ENCODE measurements at regions of chr22 and their contacts with region 1.

Region 1: DNA sequence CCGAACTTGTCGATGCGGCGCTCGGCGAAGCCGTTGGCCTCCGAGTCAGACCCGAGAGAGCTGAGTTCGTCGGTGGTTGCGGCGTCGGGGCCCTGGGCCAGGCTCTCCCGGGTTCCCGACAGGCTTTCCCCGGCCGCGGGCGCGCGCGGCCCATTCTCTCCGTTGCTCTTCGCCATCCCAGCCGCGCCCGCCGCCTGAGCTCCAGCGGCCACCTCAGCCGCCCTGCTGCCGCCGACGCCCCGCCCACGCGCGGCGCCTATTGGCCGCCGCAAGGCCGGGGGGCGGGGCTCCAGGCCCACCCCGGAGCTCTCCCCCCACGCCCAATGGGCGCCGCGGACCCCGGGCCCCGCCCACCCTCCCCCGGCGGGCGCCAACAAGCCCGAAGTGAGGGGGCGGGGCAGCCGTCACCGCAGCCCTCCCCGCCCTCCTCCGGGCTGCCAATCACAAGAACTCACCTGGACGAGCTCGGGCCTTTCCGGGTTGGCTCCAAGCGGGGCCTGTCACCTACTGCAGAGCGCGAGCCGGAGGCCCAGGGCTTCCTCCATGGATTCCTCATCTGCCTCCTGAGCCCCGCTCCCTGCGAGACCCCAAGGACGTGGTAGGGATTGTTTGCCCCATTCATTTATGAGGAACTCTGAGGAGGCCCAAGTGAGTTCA is at the start of gene TBC1D10A:
- DNase-seq: peak; percentile 92
- H3K4me3 Mint-ChIP-seq: peak within 1 kb of the TSS; percentile 71
- H3K27ac Mint-ChIP-seq: peak within 1 kb of the TSS; percentile 86
- H3K4me1 Mint-ChIP-seq: peaks cover 23% of the 10 kb centered on the region
- H3K27me3 Mint-ChIP-seq: no peaks in the 10 kb centered on the region
- CTCF ChIP-seq: no peak
- total RNA-seq, gene TBC1D10A: 11.1 and 13.1 TPM in 2 replicates

Region 2: GRCh38 chr22:30262917-30263741 is 63.7 kb before region 1 on chr22:
- CTCF ChIA-PET with region 1: interaction called, 15 read pairs
- POLR2A ChIA-PET with region 1: interaction called, 4 read pairs
- intact Hi-C with region 1: loop called (anchors 2 kb)
- DNase-seq: peak; percentile 64
- H3K4me3 Mint-ChIP-seq: peak overlapping the region; percentile 47
- H3K27ac Mint-ChIP-seq: no peak overlapping the region
- H3K4me1 Mint-ChIP-seq: peaks cover 6% of the 10 kb centered on the region
- H3K27me3 Mint-ChIP-seq: no peaks in the 10 kb centered on the region
- CTCF ChIP-seq: peak; percentile 99

Region 3: GRCh38 chr22:30305519-30305905 is 21.3 kb before region 1 on chr22:
- CTCF ChIA-PET with region 1: interaction called, 4 read pairs
- POLR2A ChIA-PET with region 1: interaction called, 36 read pairs
- intact Hi-C with region 1: no loop called
- DNase-seq: peak; percentile 42
- H3K4me3 Mint-ChIP-seq: peak overlapping the region; percentile 15
- H3K27ac Mint-ChIP-seq: peak overlapping the region; percentile 49
- H3K4me1 Mint-ChIP-seq: peaks cover 60% of the 10 kb centered on the region
- H3K27me3 Mint-ChIP-seq: no peaks in the 10 kb centered on the region
- CTCF ChIP-seq: no peak

Region 4: DNA sequence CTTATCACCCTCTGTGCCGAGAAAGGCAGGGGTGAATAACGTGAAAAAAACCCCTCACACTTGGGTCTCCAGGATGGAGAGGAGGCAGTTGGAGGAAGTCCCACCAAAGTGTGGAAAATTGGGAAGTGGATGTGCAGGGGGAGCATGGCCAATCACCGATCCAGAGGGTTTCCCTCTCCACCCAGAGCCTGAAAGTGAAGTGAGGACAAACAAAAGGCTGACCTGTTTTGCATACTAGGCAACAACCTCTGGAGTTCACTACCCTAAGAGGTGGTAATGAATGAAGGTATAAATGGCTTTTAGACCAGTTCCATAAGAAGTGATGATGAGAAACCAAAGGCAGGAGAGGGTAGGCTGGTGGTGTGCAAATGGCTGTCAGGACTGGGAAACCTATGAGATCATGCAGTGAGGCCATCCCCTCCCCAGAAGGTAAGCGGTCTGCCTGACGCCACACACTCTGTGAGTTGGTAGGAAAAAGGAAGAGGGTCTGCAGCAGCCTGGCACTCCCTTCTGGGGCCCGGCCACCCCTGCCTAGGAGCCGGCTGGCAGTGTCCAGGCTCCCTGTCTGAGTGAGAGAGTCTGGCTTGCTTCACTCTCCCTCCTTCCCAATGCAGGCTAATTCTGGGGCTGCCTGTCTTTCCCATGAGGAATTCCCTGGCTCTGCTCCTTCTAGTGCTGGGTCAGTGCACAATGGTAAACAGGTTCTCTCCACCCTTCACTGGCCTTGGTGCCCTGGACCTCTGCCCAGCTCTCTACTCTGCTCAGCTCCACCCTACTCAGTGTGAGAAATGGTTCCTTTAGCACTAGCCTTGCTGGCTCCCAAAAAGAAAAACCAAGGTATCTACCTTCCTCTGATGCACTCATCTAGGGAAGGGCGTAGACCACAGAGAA is 15.7 kb before region 1 on chr22:
- CTCF ChIA-PET with region 1: interaction called, 4 read pairs
- POLR2A ChIA-PET with region 1: interaction called, 36 read pairs
- intact Hi-C with region 1: no loop called
- DNase-seq: peak; percentile 89
- H3K4me3 Mint-ChIP-seq: peak overlapping the region; percentile 4
- H3K27ac Mint-ChIP-seq: peak overlapping the region; percentile 63
- H3K4me1 Mint-ChIP-seq: peaks cover 47% of the 10 kb centered on the region
- H3K27me3 Mint-ChIP-seq: no peaks in the 10 kb centered on the region
- CTCF ChIP-seq: no peak

Region 5: DNA sequence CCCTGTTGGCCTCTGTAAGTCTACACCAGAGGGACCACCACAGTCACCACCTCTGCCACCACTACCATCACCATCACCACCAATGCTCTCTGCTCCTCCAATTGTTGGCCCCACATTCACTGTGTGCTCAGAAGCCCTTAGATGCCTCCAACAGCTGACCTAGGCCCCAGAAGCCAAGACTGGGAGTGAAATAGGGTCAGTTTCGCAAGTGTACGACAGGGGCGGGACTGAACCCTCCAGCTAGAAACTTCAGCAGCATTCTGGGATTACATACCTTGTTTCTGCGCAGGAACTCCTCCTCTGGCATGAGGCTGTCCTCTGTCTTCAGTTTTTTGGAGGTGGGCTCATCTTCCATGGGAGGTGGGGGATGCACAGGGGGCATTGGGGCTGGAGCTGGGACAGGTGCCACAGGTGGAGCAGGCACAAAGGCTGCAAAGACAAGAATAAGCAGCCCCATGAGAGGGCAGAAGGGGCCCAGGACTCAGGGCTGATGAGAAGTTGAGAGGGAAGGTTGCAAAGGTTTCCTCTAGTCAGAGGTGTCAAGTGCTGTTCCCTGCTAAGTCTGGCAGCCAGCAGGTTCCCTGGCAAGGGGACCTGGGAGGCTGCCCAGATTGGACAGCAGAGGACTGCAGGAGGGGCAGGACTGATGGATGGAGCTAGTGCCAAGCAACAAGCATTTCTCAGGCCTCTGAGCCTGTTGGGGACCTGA is 10.1 kb after region 1 on chr22:
- CTCF ChIA-PET with region 1: interaction called, 3 read pairs
- POLR2A ChIA-PET with region 1: interaction called, 11 read pairs
- intact Hi-C with region 1: no loop called
- DNase-seq: no peak
- H3K4me3 Mint-ChIP-seq: no peak overlapping the region
- H3K27ac Mint-ChIP-seq: no peak overlapping the region
- H3K4me1 Mint-ChIP-seq: no peaks in the 10 kb centered on the region
- H3K27me3 Mint-ChIP-seq: no peaks in the 10 kb centered on the region
- CTCF ChIP-seq: no peak

Region 6: GRCh38 chr22:30348809-30349208 is 22.0 kb after region 1 on chr22:
- CTCF ChIA-PET with region 1: no interaction called
- POLR2A ChIA-PET with region 1: interaction called, 16 read pairs
- intact Hi-C with region 1: no loop called
- DNase-seq: no peak
- H3K4me3 Mint-ChIP-seq: no peak overlapping the region
- H3K27ac Mint-ChIP-seq: peak overlapping the region; percentile 27
- H3K4me1 Mint-ChIP-seq: peaks cover 4% of the 10 kb centered on the region
- H3K27me3 Mint-ChIP-seq: no peaks in the 10 kb centered on the region
- CTCF ChIP-seq: no peak

Region 7: DNA sequence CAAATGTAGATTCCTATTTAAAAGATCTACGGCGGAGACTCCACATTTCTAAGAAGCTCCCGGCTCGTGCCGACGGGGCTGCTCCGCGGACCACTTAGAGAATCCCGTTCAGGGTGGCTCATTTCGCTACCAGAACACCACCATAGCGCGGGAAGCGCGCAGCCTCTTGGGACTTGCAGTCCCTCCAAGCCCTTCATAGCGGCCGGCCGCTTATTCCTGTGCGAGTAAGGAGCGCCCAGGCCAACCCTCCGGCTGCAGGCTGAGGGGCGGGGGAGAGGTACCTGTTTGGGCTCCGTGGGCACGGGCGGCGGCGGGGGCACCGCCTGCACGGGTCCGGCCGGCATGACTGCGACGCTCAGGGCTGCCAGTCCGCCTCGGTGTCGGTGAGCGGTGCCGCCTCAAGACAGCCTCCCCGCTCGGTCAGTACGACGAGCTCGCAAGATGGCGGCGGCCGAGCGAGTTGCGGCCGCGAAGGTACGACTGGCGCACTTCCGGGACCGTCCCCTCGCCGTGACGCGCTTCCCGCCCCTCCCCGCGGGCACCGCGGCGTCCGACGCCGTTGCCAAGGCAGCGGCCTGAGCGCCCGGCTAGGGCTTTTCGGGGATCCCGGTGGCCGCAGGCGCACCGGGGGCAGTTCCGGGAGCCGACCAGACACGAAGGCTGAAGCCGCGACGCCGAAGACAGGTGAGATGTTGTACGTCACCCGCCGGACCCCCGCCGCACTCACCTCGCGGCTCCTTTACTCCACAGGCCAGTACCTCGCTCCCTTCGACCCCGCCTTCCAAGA is 29.8 kb after region 1 on chr22 and contains the starts of genes CCDC157 and SF3A1:
- CTCF ChIA-PET with region 1: interaction called, 6 read pairs
- POLR2A ChIA-PET with region 1: interaction called, 37 read pairs
- intact Hi-C with region 1: no loop called
- DNase-seq: peak; percentile 86
- H3K4me3 Mint-ChIP-seq: peak within 1 kb of the TSS; percentile 94
- H3K27ac Mint-ChIP-seq: peak within 1 kb of the TSS; percentile 89
- H3K4me1 Mint-ChIP-seq: peaks cover 28% of the 10 kb centered on the region
- H3K27me3 Mint-ChIP-seq: no peaks in the 10 kb centered on the region
- CTCF ChIP-seq: no peak
- total RNA-seq, gene CCDC157: 1.1 and 1.7 TPM in 2 replicates
- total RNA-seq, gene SF3A1: 167 and 193 TPM in 2 replicates

Region 8: DNA sequence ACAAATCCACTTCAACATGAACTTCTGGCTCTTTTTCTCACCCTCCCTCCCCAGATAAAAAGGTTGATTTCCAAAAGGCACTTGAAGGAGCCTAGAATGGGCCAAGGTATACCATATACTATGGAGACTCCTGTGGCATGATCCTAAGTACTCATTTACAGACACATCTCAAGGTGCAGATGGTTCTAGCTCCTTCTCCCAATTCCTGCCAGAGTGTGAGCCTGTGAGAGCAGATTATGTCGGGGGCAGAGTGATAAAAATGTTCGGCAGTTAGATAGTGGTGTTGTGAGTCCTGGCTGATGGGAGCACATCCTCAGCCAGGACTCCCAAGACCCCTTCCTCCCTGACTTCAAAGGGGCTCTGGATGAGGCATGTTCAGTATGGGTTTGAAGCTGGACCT is 153.1 kb after region 1 on chr22:
- CTCF ChIA-PET with region 1: no interaction called
- POLR2A ChIA-PET with region 1: no interaction called
- intact Hi-C with region 1: no loop called
- DNase-seq: no peak
- H3K4me3 Mint-ChIP-seq: no peak overlapping the region
- H3K27ac Mint-ChIP-seq: no peak overlapping the region
- H3K4me1 Mint-ChIP-seq: peaks cover 8% of the 10 kb centered on the region
- H3K27me3 Mint-ChIP-seq: no peaks in the 10 kb centered on the region
- CTCF ChIP-seq: no peak